Activated CD4-positive, alpha-beta T cell treated with anti-CD3 and anti-CD28 coated beads for 36 hours (primary cell): ENCODE measurements at regions of chr17 and their contacts with region 1.

Region 1: GRCh38 chr17:32877164-32877764 is 340 bp upstream of the MYO1D start:
- DNase-seq: peak; percentile 96
- ATAC-seq: peak; percentile 98
- H3K4me3 Mint-ChIP-seq: peak overlapping the region; percentile 66
- H3K27ac Mint-ChIP-seq: peak overlapping the region; percentile 72
- H3K4me1 Mint-ChIP-seq: peaks cover 25% of the 10 kb centered on the region
- H3K27me3 Mint-ChIP-seq: peaks cover 2% of the 10 kb centered on the region

Region 2: DNA sequence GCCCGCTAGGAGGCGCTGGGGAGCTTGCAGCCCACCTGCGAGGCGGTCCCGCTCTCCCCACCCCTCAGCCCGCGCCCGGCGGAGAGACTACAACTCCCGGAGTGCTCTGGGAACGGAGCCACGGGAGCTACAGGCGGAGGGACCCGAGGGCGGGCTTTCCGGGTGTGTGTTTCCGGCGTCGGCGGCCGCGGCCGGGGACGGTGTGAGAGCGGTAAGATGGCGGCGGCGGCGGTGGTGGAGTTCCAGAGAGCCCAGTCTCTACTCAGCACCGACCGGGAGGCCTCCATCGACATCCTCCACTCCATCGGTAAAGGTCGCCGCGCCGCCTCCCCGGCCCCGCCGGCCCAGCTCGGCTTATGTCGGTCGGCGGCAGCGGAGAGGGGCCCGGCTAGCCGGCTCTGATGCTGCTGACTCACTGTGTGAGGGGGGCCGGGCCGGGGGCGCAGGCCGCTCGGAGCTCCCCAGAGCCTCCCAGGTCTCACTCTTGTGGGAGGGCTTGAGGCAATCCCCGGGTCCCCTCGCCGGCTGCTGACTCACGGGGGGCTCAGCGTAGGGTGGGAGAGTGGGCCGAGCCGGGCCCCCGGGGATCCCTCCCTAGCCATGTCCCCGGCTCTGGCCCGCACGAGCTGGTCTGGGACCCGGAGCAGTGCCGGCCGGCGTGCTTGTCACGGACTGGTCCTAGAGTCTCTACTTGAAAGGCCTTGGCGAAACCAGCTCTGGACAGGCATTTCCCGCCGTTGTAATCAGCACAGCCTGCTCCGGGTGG is 432.8 kb before region 1 on chr17 and contains the start of gene PSMD11:
- CTCF ChIA-PET with region 1: interaction called, 3 read pairs
- POLR2A ChIA-PET with region 1: no interaction called
- intact Hi-C with region 1: loop called (anchors 1 to 5 kb)
- DNase-seq: peak; percentile 100
- ATAC-seq: peak; percentile 96
- H3K4me3 Mint-ChIP-seq: peak within 1 kb of the TSS; percentile 82
- H3K27ac Mint-ChIP-seq: peak within 1 kb of the TSS; percentile 95
- H3K4me1 Mint-ChIP-seq: peaks cover 32% of the 10 kb centered on the region
- H3K27me3 Mint-ChIP-seq: peaks cover 2% of the 10 kb centered on the region
- total RNA-seq, gene PSMD11: 109 to 135 TPM

Region 3: DNA sequence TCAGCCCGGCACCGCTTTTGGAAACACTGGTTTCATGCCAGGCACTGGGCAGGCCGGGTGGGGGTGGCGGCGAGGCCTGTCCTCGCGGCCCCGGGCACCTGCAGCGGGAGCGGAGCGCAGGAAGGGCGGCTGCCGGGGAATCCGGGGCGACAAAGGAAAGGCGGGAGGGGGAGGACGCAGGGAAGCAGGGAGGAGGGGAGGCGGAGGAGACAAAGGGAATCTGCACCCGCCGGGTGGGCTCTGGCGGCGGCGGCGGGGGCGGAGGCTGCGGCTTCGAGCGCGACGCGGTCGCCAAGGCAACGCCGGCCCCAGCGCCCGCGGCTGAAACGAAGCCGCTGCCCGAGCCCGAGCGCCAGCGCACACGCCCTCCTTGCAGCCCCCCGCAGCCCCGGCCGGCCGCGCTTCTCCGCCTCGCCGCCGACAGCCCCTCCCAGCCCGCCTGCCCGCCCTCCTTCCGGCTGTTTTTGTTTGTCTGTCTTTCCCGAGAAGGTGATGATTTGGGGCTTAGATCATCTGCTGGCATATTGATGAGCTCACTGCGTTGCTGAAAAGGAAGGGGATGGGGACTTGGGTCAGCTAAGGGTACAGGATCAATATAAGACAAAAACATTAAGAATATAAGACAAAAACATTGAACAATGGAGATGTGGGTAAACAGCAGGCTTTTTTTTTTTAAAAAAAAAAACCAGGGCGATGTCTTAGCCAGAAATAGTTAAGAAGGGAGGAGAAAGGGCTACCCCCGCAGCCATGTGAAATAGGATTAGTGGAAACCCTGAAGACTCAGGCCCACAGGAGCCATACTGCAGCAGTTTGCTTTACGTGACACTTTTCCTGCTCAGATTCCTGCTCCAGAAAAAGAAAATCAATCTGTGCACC is 357.8 kb before region 1 on chr17:
- CTCF ChIA-PET with region 1: interaction called, 5 read pairs
- POLR2A ChIA-PET with region 1: interaction called, 4 read pairs
- intact Hi-C with region 1: loop called in 1 of 2 experiments (anchors 1 kb)
- DNase-seq: peak; percentile 82
- ATAC-seq: peak; percentile 5
- H3K4me3 Mint-ChIP-seq: peak overlapping the region; percentile 70
- H3K27ac Mint-ChIP-seq: peak overlapping the region; percentile 92
- H3K4me1 Mint-ChIP-seq: peaks cover 89% of the 10 kb centered on the region
- H3K27me3 Mint-ChIP-seq: no peaks in the 10 kb centered on the region

Region 4: DNA sequence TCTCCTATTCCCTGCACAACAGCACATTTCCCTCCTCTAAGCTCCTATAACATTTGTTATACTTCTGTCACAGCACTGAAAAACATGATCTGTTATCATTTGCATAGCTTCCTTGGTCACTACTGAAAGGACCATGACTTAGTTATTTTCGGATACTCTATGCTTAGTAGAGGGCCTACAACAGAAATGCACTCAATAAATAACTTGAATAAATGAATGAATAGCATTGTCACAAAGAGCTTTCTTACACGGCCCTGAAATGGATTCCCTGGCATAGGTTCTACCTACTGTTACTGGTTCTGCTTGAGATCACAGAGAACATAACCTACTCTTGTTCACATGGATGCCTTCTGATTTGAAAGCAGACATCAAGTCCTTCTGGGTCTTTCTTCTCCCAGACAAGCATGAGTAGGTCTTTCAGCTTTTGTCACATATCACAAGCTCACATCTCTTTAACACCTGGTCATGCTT is 41.9 kb before region 1 on chr17:
- CTCF ChIA-PET with region 1: interaction called, 11 read pairs
- POLR2A ChIA-PET with region 1: no interaction called
- intact Hi-C with region 1: no loop called
- DNase-seq: no peak
- ATAC-seq: no peak
- H3K4me3 Mint-ChIP-seq: no peak overlapping the region
- H3K27ac Mint-ChIP-seq: no peak overlapping the region
- H3K4me1 Mint-ChIP-seq: no peaks in the 10 kb centered on the region
- H3K27me3 Mint-ChIP-seq: peaks cover 5% of the 10 kb centered on the region

Region 5: DNA sequence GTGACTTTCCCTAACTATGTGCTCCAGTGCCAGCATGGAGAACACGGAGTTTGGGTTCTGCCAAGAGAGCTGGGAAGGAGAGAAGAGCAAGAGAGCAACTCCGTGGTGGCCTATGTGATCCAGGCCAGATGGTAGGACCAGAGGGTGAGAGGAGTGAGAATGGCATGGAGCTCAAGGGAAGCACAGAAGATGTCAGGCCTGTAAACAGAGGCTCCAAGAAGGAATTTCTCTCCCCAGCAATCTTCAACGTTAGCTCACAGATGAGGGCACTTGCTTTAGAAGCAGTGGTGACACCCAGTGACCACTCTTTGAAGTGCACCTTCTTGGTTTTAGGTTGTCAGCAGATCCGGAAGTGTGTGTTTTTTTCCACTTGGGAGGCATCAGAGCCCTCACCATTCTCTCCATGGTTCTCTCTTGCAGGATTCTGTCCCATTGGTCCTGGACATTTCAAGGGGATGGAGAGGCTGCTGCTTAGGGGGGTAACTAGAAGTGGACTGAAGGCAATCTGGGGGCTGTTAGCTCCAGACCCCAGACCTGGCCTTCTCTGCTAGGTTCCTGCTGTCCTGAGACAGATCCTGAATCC is 32.6 kb after region 1 on chr17:
- CTCF ChIA-PET with region 1: interaction called, 17 read pairs
- POLR2A ChIA-PET with region 1: no interaction called
- intact Hi-C with region 1: loop called (anchors 1 kb)
- DNase-seq: peak; percentile 79
- ATAC-seq: peak; percentile 71
- H3K4me3 Mint-ChIP-seq: no peak overlapping the region
- H3K27ac Mint-ChIP-seq: no peak overlapping the region
- H3K4me1 Mint-ChIP-seq: peaks cover 9% of the 10 kb centered on the region
- H3K27me3 Mint-ChIP-seq: peaks cover 20% of the 10 kb centered on the region